CD4-positive, alpha-beta memory T cell (primary cell): ENCODE measurements at regions of chr2 and their contacts with region 1.

Region 1: DNA sequence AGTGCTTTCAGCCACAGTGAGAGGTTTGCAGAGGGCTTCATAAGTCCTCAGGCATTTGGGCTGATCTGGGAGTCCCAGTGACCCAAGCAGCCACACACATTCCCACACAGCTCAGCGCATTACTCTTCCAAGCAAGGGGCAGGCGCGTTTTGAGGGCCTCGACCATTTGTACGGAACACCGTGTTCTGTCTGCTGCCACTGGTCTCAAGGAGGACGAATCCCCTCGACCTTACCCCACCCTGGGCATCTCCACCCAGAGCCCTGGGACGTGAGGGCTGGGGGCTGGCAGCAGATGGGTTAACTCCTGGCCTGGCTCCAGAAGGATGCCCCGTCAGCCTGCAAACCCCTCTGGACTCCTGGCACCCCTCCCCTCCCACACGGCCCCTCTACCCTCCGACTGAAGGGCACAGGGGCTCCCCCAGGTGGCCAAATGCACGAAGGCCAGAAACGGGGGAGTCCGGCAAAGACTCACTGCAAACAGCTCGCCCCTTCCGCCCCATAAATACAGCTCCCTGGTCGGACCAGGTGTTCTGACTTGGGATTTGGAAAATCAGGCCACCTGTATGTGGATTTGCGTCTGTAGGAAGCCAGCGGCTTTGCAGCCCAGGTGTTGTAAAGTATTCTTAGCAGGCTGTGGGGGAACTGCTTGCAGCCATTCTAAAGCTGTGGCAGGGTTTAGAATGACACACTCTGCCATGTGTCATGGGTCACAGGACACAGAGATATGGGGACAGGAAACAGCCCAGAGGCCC is 33.6 kb upstream of the PTMA start:
- DNase-seq: peak in 4 of 5 donors; percentile 33 to 52 (median 38)
- H3K4me3 ChIP-seq: no peak overlapping the region
- H3K4me3 Mint-ChIP-seq: no peak overlapping the region
- H3K27ac ChIP-seq: no peak overlapping the region
- H3K27ac Mint-ChIP-seq: peak overlapping the region in 1 of 7 donors; percentile 37
- H3K4me1 ChIP-seq: peaks cover 10% of the 10 kb centered on the region
- H3K4me1 Mint-ChIP-seq: peaks cover 2 to 10% (median 4%) of the 10 kb centered on the region in 4 donors
- H3K27me3 ChIP-seq: no peaks in the 10 kb centered on the region
- H3K27me3 Mint-ChIP-seq: peaks cover 1 to 2% of the 10 kb centered on the region in 2 donors

Region 2: DNA sequence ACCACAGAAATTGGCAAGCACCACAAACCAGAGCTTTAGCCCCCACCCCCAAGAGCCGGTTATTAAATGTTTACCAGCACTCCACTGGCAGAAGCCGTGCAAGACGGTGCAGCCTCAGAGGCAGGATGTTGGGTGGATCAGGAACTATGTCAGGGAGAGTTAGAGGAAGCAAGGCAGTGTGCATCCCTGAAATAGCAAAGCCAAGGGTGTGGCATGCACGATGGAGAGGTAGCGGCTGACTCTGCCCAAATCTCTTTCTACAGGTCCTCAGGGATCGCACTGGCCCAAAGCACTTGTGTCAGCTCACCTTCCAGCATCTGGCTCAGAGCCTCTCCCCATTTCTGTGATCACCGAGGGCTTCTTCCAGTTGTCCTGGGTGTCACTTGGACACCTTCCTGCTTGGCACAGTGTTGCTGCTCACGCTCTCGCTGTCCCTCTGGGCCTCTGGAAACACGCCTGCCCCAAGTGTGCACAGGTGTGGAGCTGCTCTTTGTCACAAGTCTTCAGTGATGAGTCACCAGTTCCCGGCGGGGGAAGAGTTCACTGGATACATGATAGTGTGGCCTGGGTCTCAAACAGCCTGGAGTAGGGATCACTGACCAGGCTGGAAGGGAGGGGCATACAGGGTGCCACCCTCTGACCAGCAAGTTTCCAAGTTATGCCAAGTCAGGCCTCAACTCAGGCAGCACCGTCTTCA is 296.6 kb before region 1 on chr2:
- CTCF ChIA-PET with region 1: no interaction called
- POLR2A ChIA-PET with region 1: no interaction called
- intact Hi-C with region 1: no loop called
- DNase-seq: no peak
- H3K4me3 ChIP-seq: no peak overlapping the region
- H3K4me3 Mint-ChIP-seq: no peak overlapping the region
- H3K27ac ChIP-seq: no peak overlapping the region
- H3K27ac Mint-ChIP-seq: no peak overlapping the region
- H3K4me1 ChIP-seq: no peaks in the 10 kb centered on the region
- H3K4me1 Mint-ChIP-seq: no peaks in the 10 kb centered on the region
- H3K27me3 ChIP-seq: no peaks in the 10 kb centered on the region
- H3K27me3 Mint-ChIP-seq: peaks cover 3 to 6% of the 10 kb centered on the region in 2 donors

Region 3: DNA sequence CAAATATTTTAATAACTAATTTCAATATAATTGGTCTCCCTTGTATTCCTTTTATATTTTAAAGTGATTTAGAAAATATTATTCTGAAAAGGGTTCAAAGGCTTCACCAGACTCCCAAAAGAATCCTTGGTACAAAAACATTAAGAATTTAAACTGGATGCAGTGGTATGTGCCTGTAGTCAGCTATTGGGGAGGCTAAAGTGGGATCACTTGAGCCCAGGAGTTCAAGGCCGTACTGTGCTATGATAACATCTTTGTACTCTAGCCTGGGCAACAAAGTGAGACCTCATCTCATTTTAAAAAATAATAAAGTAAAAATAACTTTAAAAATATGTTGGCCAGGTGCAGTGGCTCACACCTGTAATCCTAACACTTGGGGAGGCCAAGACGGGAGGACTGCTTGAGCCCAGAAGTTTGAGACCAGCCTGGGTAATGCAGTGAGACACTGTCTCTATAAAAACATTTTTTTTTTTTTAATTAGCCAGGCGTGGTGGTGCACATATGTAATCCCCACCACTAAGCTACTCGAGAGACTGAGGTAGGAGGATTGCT is 225.2 kb before region 1 on chr2:
- CTCF ChIA-PET with region 1: no interaction called
- POLR2A ChIA-PET with region 1: no interaction called
- intact Hi-C with region 1: no loop called
- DNase-seq: no peak
- H3K4me3 ChIP-seq: no peak overlapping the region
- H3K4me3 Mint-ChIP-seq: no peak overlapping the region
- H3K27ac ChIP-seq: no peak overlapping the region
- H3K27ac Mint-ChIP-seq: no peak overlapping the region
- H3K4me1 ChIP-seq: no peaks in the 10 kb centered on the region
- H3K4me1 Mint-ChIP-seq: peaks cover 0 to 9% (median 6%) of the 10 kb centered on the region in 4 donors
- H3K27me3 ChIP-seq: no peaks in the 10 kb centered on the region
- H3K27me3 Mint-ChIP-seq: no peaks in the 10 kb centered on the region

Region 4: GRCh38 chr2:231612179-231613053 is 62.3 kb before region 1 on chr2:
- CTCF ChIA-PET with region 1: interaction called, 286 read pairs
- POLR2A ChIA-PET with region 1: interaction called, 49 read pairs
- intact Hi-C with region 1: loop called (anchors 1 kb)
- DNase-seq: peak; percentile 81 to 88 (median 83)
- H3K4me3 ChIP-seq: peak overlapping the region in 1 of 2 donors; percentile 62
- H3K4me3 Mint-ChIP-seq: peak overlapping the region; percentile 71 to 96 (median 87)
- H3K27ac ChIP-seq: peak overlapping the region; percentile 65
- H3K27ac Mint-ChIP-seq: peak overlapping the region; percentile 88 to 96 (median 93)
- H3K4me1 ChIP-seq: peaks cover 23% of the 10 kb centered on the region
- H3K4me1 Mint-ChIP-seq: peaks cover 18 to 41% (median 28%) of the 10 kb centered on the region in 4 donors
- H3K27me3 ChIP-seq: no peaks in the 10 kb centered on the region
- H3K27me3 Mint-ChIP-seq: no peaks in the 10 kb centered on the region

Region 5: GRCh38 chr2:231648587-231649174 is 26.1 kb before region 1 on chr2:
- CTCF ChIA-PET with region 1: interaction called, 39 read pairs
- POLR2A ChIA-PET with region 1: no interaction called
- intact Hi-C with region 1: loop called (anchors 2 kb)
- DNase-seq: peak in 4 of 5 donors; percentile 19 to 32 (median 26)
- H3K4me3 ChIP-seq: no peak overlapping the region
- H3K4me3 Mint-ChIP-seq: no peak overlapping the region
- H3K27ac ChIP-seq: no peak overlapping the region
- H3K27ac Mint-ChIP-seq: no peak overlapping the region
- H3K4me1 ChIP-seq: no peaks in the 10 kb centered on the region
- H3K4me1 Mint-ChIP-seq: peaks cover 0 to 5% (median under 1%) of the 10 kb centered on the region in 4 donors
- H3K27me3 ChIP-seq: no peaks in the 10 kb centered on the region
- H3K27me3 Mint-ChIP-seq: peaks cover 0 to 2% of the 10 kb centered on the region in 2 donors

Region 6: DNA sequence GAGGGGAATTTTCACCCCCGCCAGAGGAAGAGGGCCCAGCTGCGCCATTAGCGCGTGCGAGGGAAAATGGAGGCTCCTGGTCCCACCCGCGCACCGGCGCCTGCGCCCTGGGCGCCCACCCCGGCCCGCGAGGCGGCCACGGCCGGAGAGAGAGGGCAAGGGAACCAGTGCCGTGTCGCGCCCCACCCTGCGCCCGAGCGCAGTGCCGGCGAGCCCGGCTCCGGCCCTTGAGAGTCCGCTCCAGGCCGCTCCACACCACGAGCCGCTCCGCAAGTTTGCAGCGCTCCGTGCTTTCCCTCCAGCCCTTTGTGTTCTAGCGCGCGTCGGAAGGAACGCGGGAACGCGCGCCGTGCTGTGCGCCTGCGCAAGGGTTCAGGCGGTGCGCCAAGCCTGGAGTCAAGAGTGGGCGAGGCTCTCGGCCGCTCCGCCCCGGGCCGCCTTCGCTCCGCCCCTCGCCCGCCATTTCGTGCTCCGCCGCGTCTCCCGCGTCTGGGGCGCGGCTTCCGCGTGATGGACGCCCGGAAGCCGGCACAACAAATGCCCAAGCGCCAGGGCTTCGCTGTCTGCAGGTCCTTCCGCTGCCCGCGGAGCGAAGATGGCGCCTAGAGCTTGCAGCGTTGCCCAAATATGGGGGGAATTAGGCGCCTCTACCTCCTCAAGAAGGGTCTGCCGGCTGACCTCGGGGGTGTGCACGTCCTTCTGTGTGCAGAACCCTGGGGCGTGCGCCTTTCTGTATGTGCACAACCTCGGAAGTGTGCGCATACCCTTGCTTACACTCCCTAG is 12.5 kb before region 1 on chr2:
- CTCF ChIA-PET with region 1: interaction called, 49 read pairs
- POLR2A ChIA-PET with region 1: interaction called, 12 read pairs
- intact Hi-C with region 1: loop called (anchors 1 kb)
- DNase-seq: peak; percentile 93 to 99 (median 99)
- H3K4me3 ChIP-seq: peak overlapping the region; percentile 43 to 60
- H3K4me3 Mint-ChIP-seq: peak overlapping the region; percentile 75 to 86 (median 80)
- H3K27ac ChIP-seq: peak overlapping the region; percentile 86
- H3K27ac Mint-ChIP-seq: peak overlapping the region; percentile 90 to 99 (median 97)
- H3K4me1 ChIP-seq: peaks cover 14% of the 10 kb centered on the region
- H3K4me1 Mint-ChIP-seq: peaks cover 5 to 23% (median 13%) of the 10 kb centered on the region in 4 donors
- H3K27me3 ChIP-seq: no peaks in the 10 kb centered on the region
- H3K27me3 Mint-ChIP-seq: no peaks in the 10 kb centered on the region

Region 7: DNA sequence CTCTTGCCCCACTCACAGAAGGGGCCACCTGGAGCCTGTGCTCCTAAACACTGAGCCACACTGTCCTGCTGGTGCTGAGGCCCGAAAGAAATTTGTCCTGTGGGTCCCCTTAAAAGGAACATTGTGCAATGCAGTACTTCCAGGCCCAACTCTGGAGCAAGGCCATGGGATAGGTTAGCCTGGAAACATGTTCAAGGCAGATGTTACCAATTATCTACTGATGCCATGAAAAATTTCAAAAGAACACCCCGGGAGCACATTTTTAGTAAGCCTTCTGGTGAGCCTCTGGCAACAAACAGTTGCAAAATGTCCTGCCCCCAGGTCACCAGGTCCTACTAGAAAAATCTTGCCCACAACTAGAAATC is 21.2 kb after region 1 on chr2:
- CTCF ChIA-PET with region 1: interaction called, 109 read pairs
- POLR2A ChIA-PET with region 1: no interaction called
- intact Hi-C with region 1: no loop called
- DNase-seq: no peak
- H3K4me3 ChIP-seq: no peak overlapping the region
- H3K4me3 Mint-ChIP-seq: no peak overlapping the region
- H3K27ac ChIP-seq: no peak overlapping the region
- H3K27ac Mint-ChIP-seq: no peak overlapping the region
- H3K4me1 ChIP-seq: no peaks in the 10 kb centered on the region
- H3K4me1 Mint-ChIP-seq: no peaks in the 10 kb centered on the region
- H3K27me3 ChIP-seq: no peaks in the 10 kb centered on the region
- H3K27me3 Mint-ChIP-seq: no peaks in the 10 kb centered on the region

Region 8: GRCh38 chr2:231713730-231714430 is 39.1 kb after region 1 on chr2:
- CTCF ChIA-PET with region 1: interaction called, 742 read pairs
- POLR2A ChIA-PET with region 1: interaction called, 136 read pairs
- intact Hi-C with region 1: loop called (anchors 1 kb)
- DNase-seq: peak; percentile 87 to 91 (median 89)
- H3K4me3 ChIP-seq: no peak overlapping the region
- H3K4me3 Mint-ChIP-seq: peak overlapping the region; percentile 32 to 88 (median 66)
- H3K27ac ChIP-seq: peak overlapping the region; percentile 36
- H3K27ac Mint-ChIP-seq: peak overlapping the region; percentile 94 to 100 (median 98)
- H3K4me1 ChIP-seq: peaks cover 40% of the 10 kb centered on the region
- H3K4me1 Mint-ChIP-seq: peaks cover 24 to 47% (median 34%) of the 10 kb centered on the region in 4 donors
- H3K27me3 ChIP-seq: no peaks in the 10 kb centered on the region
- H3K27me3 Mint-ChIP-seq: no peaks in the 10 kb centered on the region

Region 9: GRCh38 chr2:231786177-231786916 is 111.6 kb after region 1 on chr2 and contains the start of gene COPS7B:
- CTCF ChIA-PET with region 1: interaction called, 3 read pairs
- POLR2A ChIA-PET with region 1: no interaction called
- intact Hi-C with region 1: loop called (anchors 1 kb)
- DNase-seq: peak; percentile 73 to 83 (median 75)
- H3K4me3 ChIP-seq: peak within 1 kb of the TSS; percentile 69 to 77
- H3K4me3 Mint-ChIP-seq: peak within 1 kb of the TSS; percentile 90 to 97 (median 92)
- H3K27ac ChIP-seq: peak within 1 kb of the TSS; percentile 73
- H3K27ac Mint-ChIP-seq: peak within 1 kb of the TSS; percentile 88 to 97 (median 92)
- H3K4me1 ChIP-seq: peaks cover 46% of the 10 kb centered on the region
- H3K4me1 Mint-ChIP-seq: peaks cover 47 to 85% (median 65%) of the 10 kb centered on the region in 4 donors
- H3K27me3 ChIP-seq: no peaks in the 10 kb centered on the region
- H3K27me3 Mint-ChIP-seq: no peaks in the 10 kb centered on the region
- total RNA-seq, gene COPS7B: 51.8 to 57.9 TPM